ENCODE measurements at regions of chr4 and their contacts with region 1.

Region 1: DNA sequence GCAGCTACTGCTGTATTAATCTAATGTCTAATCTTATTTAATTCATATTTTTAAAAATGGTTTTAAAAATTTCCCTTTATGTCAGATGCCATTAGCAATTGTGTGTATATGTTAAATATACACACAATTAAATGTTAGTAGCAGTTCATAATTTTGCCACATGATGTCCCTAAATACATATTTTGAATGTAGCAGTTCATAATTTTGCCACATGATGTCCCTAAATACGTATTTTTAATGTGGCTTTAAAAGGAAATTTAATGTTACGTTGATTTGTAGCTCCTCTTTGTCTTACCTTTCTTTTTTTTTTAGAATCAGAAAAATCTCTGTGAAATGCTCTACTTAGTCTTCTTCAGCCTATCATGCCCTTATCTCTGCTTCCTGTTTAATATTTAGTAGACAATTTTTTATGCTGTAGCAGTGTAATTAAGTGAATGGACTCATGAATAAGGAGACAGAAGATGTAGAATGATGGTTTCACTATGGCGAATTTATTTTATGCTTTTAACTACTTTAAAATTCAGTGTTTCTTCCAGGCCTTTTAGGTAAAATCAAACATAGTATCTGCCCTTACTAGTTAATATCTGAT is 26.1 kb downstream of the RBM46 start:
- DNase-seq: no peak
- H3K4me3 ChIP-seq: no peak overlapping the region
- H3K27ac ChIP-seq: no peak overlapping the region
- H3K27me3 ChIP-seq: no peaks in the 10 kb centered on the region
- CTCF ChIP-seq: peak; percentile 73

Region 2: DNA sequence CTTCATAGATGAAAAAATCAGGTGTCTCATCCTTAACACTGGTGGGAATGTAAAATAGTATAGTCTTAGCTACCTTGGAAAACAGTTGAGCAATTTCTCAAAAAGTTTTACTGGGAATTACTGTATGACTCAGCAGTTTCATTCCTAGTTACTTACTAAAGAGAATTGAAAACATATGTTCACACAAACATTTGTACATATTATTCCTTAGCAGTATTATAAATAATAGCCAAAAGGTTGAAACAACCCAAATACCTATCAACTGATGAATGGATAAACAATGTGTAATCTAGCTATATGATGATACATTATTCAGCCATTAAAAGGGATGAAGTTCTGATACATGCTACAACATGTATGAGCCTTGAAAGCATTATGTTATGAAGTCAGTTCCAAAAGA is 15.6 kb after region 1 on chr4:
- CTCF ChIA-PET with region 1: interaction called, 18 read pairs
- POLR2A ChIA-PET with region 1: no interaction called
- DNase-seq: peak; percentile 32
- H3K4me3 ChIP-seq: no peak overlapping the region
- H3K27ac ChIP-seq: no peak overlapping the region
- H3K27me3 ChIP-seq: no peaks in the 10 kb centered on the region
- CTCF ChIP-seq: no peak

Region 3: GRCh38 chr4:154911097-154911496 is 104.0 kb after region 1 on chr4:
- CTCF ChIA-PET with region 1: interaction called, 18 read pairs
- POLR2A ChIA-PET with region 1: no interaction called
- DNase-seq: no peak
- H3K4me3 ChIP-seq: no peak overlapping the region
- H3K27ac ChIP-seq: no peak overlapping the region
- H3K27me3 ChIP-seq: no peaks in the 10 kb centered on the region
- CTCF ChIP-seq: peak; percentile 21

Region 4: GRCh38 chr4:154928640-154929257 is 121.6 kb after region 1 on chr4:
- CTCF ChIA-PET with region 1: interaction called, 83 read pairs
- POLR2A ChIA-PET with region 1: no interaction called
- DNase-seq: peak; percentile 13
- H3K4me3 ChIP-seq: no peak overlapping the region
- H3K27ac ChIP-seq: no peak overlapping the region
- H3K27me3 ChIP-seq: no peaks in the 10 kb centered on the region
- CTCF ChIP-seq: peak; percentile 55

Region 5: DNA sequence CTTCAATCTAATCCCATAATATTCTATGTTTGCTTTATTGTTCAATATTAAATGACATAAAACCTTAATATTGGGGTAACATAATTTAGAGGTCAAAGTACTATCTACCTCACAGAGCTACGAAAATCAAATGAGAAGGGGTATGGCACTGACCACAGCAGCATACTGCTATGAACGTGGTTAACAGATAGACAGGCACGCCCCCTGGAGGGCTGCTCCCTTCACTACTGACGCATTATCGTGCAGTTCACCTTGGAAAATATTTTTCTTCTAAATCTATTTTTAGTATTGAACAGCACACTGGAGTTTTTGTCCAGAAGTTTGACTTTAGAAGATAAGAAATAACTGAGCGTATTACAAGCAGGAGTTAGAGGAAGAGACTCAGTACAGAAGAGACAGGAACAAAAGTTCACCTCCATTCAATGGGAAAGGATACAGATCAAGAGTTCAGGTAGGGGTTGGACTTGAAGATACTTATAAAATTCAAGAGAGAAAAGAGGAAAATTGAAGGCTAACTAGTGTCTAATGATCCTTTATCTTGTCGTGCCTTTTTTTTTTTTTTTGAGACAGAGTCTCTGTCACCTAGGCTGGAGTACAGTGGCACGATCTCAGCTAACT is 546.9 kb after region 1 on chr4:
- CTCF ChIA-PET with region 1: interaction called, 10 read pairs
- POLR2A ChIA-PET with region 1: no interaction called
- DNase-seq: no peak
- H3K4me3 ChIP-seq: no peak overlapping the region
- H3K27ac ChIP-seq: no peak overlapping the region
- H3K27me3 ChIP-seq: no peaks in the 10 kb centered on the region
- CTCF ChIP-seq: peak; percentile 89